CD8-positive, alpha-beta T cell (primary cell): ENCODE measurements at regions of chr5 and their contacts with region 1.

Region 1: DNA sequence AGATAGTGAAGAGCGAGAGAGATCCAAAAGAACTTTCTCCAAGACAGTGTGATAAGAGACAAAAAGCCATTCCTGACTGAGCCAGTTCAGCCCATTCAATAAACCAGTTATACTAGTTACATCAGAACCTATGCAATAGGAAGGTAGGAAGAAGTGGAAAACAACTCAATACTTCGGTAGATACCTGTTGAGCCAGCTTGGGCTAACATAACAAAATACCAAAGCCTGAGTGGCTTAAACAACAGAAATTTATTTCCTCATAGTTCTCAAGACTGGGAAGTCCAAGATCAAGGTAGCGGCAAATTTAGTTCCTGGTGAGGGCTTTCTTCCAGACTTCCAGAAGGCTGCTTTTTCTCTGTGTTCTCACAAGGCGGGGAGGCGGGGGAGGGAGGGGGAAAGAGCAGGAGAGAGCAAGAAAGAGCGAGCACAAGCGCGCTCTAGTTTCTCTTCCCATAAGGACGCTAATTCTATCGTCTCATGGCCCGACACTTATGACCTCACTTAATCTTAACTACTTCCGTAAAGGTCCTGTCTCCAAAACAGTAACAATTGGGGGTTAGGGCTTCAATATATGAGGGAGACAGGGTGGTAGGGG is 214.4 kb upstream of the GRAMD2B start:
- DNase-seq: no peak
- ATAC-seq: no peak
- H3K4me3 ChIP-seq: no peak overlapping the region
- H3K4me3 Mint-ChIP-seq: no peak overlapping the region
- H3K27ac ChIP-seq: no peak overlapping the region
- H3K27ac Mint-ChIP-seq: no peak overlapping the region
- H3K4me1 ChIP-seq: no peaks in the 10 kb centered on the region
- H3K4me1 Mint-ChIP-seq: no peaks in the 10 kb centered on the region
- H3K27me3 ChIP-seq: no peaks in the 10 kb centered on the region
- H3K27me3 Mint-ChIP-seq: peaks cover 2% of the 10 kb centered on the region
- CTCF ChIP-seq: no peak

Region 2: GRCh38 chr5:125343015-125343414 is 865.8 kb before region 1 on chr5:
- CTCF ChIA-PET with region 1: no interaction called
- POLR2A ChIA-PET with region 1: no interaction called
- intact Hi-C with region 1: loop called in 1 of 2 experiments (anchors 5 kb)
- DNase-seq: no peak
- ATAC-seq: no peak
- H3K4me3 ChIP-seq: no peak overlapping the region
- H3K4me3 Mint-ChIP-seq: no peak overlapping the region
- H3K27ac ChIP-seq: no peak overlapping the region
- H3K27ac Mint-ChIP-seq: no peak overlapping the region
- H3K4me1 ChIP-seq: no peaks in the 10 kb centered on the region
- H3K4me1 Mint-ChIP-seq: no peaks in the 10 kb centered on the region
- H3K27me3 ChIP-seq: no peaks in the 10 kb centered on the region
- H3K27me3 Mint-ChIP-seq: no peaks in the 10 kb centered on the region
- CTCF ChIP-seq: no peak

Region 3: GRCh38 chr5:125510651-125511050 is 698.2 kb before region 1 on chr5:
- CTCF ChIA-PET with region 1: no interaction called
- POLR2A ChIA-PET with region 1: no interaction called
- intact Hi-C with region 1: no loop called
- DNase-seq: no peak
- ATAC-seq: no peak
- H3K4me3 ChIP-seq: no peak overlapping the region
- H3K4me3 Mint-ChIP-seq: no peak overlapping the region
- H3K27ac ChIP-seq: no peak overlapping the region
- H3K27ac Mint-ChIP-seq: no peak overlapping the region
- H3K4me1 ChIP-seq: no peaks in the 10 kb centered on the region
- H3K4me1 Mint-ChIP-seq: no peaks in the 10 kb centered on the region
- H3K27me3 ChIP-seq: no peaks in the 10 kb centered on the region
- H3K27me3 Mint-ChIP-seq: no peaks in the 10 kb centered on the region
- CTCF ChIP-seq: no peak

Region 4: DNA sequence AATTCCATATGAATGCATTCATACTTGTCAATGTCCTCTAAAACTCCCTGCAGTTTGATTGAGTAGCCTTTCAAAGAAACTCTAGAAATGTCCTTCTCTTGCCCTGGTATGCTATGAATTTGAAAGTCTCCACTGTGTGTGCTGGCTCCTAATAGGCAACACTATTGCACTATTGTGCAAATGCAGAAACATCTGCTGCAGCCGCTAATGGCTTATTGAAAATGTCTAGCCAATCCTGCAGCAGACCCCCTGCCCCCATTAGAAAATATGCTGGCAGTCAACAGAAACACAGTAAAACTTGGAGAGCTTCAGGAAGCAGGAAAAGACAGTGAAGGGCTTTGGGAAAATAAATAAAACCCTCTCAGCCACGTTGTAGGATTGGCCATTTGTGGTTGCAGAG is 127.1 kb after region 1 on chr5:
- CTCF ChIA-PET with region 1: no interaction called
- POLR2A ChIA-PET with region 1: no interaction called
- intact Hi-C with region 1: no loop called
- DNase-seq: no peak
- ATAC-seq: no peak
- H3K4me3 ChIP-seq: no peak overlapping the region
- H3K4me3 Mint-ChIP-seq: no peak overlapping the region
- H3K27ac ChIP-seq: no peak overlapping the region
- H3K27ac Mint-ChIP-seq: no peak overlapping the region
- H3K4me1 ChIP-seq: no peaks in the 10 kb centered on the region
- H3K4me1 Mint-ChIP-seq: no peaks in the 10 kb centered on the region
- H3K27me3 ChIP-seq: no peaks in the 10 kb centered on the region
- H3K27me3 Mint-ChIP-seq: peaks cover 6% of the 10 kb centered on the region
- CTCF ChIP-seq: no peak